Activated CD4-positive, alpha-beta memory T cell treated with anti-CD3 and anti-CD28 coated beads, Interleukin-2, amount 10 ng/mL, durations not matched to agents 7 days and 5 days (primary cell): ENCODE measurements at regions of chr3 and their contacts with region 1.

Region 1: DNA sequence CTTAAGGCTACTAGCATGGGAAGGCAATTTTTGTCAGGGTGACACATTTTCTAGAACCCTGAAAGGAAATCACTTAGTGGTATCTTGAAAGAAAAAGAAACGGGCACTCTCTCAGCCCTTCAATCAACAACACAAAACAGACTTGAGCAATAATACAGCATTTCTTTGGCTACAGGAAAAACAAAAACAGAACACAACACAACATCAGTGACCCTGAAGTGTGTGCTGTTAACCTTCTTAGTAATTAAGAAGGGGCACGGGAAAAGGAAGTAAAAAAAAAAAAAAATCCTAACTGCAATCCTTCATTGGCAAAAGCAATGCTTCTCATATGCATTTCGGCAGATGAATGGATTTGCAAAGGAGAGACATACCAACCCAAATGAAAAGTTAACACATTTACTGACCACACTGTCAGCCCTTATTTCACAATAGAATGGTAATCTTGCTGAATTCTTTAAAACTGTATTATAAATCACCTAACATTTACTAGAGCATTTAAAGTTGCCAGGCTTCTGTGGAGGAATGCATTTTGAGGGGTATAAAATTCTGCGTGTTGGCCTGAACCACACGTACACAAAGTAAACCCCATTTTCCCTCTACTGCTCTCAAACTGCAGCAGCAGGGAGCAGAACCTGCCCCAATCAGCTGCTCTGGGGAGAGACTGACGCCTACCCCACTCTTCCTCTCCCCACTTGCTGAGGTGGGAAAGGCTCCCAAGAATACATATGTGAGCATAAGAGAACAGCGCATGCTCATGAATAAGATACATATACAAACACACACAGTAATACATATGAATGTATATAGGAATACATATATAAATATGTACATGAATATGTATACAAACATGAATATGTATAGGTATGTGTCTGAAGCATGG is 198.5 kb downstream of the FOXP1 start:
- DNase-seq: no peak
- H3K4me3 Mint-ChIP-seq: no peak overlapping the region
- H3K27ac Mint-ChIP-seq: peak overlapping the region; percentile 23
- H3K4me1 Mint-ChIP-seq: peaks cover 43% of the 10 kb centered on the region
- H3K27me3 Mint-ChIP-seq: no peaks in the 10 kb centered on the region

Region 2: GRCh38 chr3:71360764-71361163 is 24.3 kb before region 1 on chr3:
- CTCF ChIA-PET with region 1: no interaction called
- POLR2A ChIA-PET with region 1: interaction called, 13 read pairs
- DNase-seq: no peak
- H3K4me3 Mint-ChIP-seq: peak overlapping the region; percentile 31
- H3K27ac Mint-ChIP-seq: peak overlapping the region; percentile 79
- H3K4me1 Mint-ChIP-seq: peaks cover 65% of the 10 kb centered on the region
- H3K27me3 Mint-ChIP-seq: no peaks in the 10 kb centered on the region